ENCODE measurements at regions of chr19 and their contacts with region 1.

Region 1: GRCh38 chr19:11380653-11381534 is 3.2 kb downstream of the EPOR start:
- DNase-seq: peak; percentile 96 to 98 (median 97)
- H3K4me3 ChIP-seq: peak overlapping the region; percentile 47 to 87 (median 71)
- H3K27ac ChIP-seq: peak overlapping the region; percentile 50 to 80
- H3K4me1 ChIP-seq: peaks cover 13 to 66% (median 61%) of the 10 kb centered on the region in 4 experiments
- H3K27me3 ChIP-seq: peaks cover 0 to 6% (median 0%) of the 10 kb centered on the region in 5 experiments

Region 2: DNA sequence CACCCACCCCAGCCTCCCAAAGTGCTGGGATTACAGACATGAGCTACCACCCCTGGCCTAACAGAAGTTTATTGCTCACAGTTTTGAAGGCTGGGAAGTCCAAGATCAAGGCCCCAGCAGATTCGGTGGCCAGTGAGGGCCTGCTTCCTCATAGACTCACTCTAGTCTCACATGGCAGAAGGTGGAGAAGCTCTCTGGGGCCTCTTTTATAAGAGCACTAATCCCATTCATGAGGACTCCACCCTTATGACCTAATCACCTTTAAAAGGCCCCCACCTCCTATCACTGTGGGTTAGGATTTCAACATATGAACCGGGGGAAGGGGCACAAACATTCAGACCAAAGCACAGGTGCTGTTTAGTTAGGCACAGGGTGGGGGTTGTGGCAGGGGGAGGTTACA is 13.4 kb before region 1 on chr19:
- CTCF ChIA-PET with region 1: interaction called, 12 read pairs
- POLR2A ChIA-PET with region 1: no interaction called
- DNase-seq: no peak
- H3K4me3 ChIP-seq: no peak overlapping the region
- H3K27ac ChIP-seq: no peak overlapping the region
- H3K4me1 ChIP-seq: no peaks in the 10 kb centered on the region
- H3K27me3 ChIP-seq: no peaks in the 10 kb centered on the region

Region 3: GRCh38 chr19:11405846-11406643 is 25.2 kb after region 1 on chr19:
- CTCF ChIA-PET with region 1: interaction called, 36 read pairs
- POLR2A ChIA-PET with region 1: no interaction called
- DNase-seq: no peak
- H3K4me3 ChIP-seq: no peak overlapping the region
- H3K27ac ChIP-seq: no peak overlapping the region
- H3K4me1 ChIP-seq: peaks cover 0 to 3% (median 0%) of the 10 kb centered on the region in 4 experiments
- H3K27me3 ChIP-seq: peaks cover 0 to 13% (median 4%) of the 10 kb centered on the region in 5 experiments

Region 4: DNA sequence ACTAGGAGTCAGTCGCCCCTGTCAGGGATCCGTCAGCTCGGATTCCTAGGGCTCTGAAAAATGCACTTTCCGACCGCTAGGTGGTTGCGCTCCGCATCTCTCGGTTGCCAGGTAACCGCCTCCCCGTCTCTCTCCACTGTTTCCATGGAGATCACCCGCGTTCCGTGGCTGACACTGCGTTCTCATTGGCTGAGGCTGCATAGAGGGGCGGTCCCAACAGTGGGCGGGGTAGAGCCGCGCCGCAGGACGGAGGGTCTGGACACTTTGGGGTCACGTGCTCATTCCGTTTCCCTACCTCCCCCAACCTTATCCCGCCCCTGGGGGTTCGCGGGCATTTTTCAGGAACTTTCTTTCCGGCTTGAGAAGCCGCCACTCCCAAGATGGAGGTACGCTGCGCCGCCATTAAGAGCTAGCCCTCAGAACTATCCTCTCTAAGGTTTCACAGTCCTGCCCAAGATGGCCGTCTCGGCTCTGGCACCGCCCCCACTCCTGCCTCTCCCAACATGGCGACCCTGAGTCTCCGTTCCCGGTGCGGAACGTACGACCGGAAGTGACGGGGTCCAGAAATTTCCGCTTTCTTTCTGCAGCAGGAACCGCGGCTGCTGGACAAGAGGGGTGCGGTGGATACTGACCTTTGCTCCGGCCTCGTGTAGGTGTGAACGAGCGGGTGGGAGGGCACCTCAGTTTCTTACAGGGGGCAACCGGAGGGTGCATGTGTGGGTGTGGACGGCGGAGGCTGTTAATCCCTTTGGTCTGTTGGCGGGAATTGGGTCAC is 54.4 kb after region 1 on chr19 and contains the starts of genes ODAD3 and PRKCSH:
- CTCF ChIA-PET with region 1: interaction called, 21 read pairs
- POLR2A ChIA-PET with region 1: interaction called, 4 read pairs
- DNase-seq: peak; percentile 100
- H3K4me3 ChIP-seq: peak within 1 kb of the TSS; percentile 74 to 99 (median 96)
- H3K27ac ChIP-seq: peak within 1 kb of the TSS; percentile 78 to 83
- H3K4me1 ChIP-seq: peaks cover 2 to 18% (median 15%) of the 10 kb centered on the region in 4 experiments
- H3K27me3 ChIP-seq: peaks cover 0 to 2% (median 0%) of the 10 kb centered on the region in 5 experiments

Region 5: GRCh38 chr19:11482384-11483050 is 101.6 kb after region 1 on chr19:
- CTCF ChIA-PET with region 1: interaction called, 10 read pairs
- POLR2A ChIA-PET with region 1: no interaction called
- DNase-seq: peak; percentile 91 to 96 (median 96)
- H3K4me3 ChIP-seq: peak overlapping the region in 4 of 7 experiments; percentile 11 to 51 (median 38)
- H3K27ac ChIP-seq: no peak overlapping the region
- H3K4me1 ChIP-seq: peaks cover 0 to 28% (median 20%) of the 10 kb centered on the region in 4 experiments
- H3K27me3 ChIP-seq: peaks cover 0 to 58% (median 18%) of the 10 kb centered on the region in 5 experiments

Region 6: GRCh38 chr19:11528551-11529341 is 147.9 kb after region 1 on chr19 and contains the start of gene ECSIT:
- CTCF ChIA-PET with region 1: no interaction called
- POLR2A ChIA-PET with region 1: no interaction called
- DNase-seq: peak; percentile 97 to 98 (median 98)
- H3K4me3 ChIP-seq: peak within 1 kb of the TSS; percentile 88 to 96 (median 92)
- H3K27ac ChIP-seq: peak within 1 kb of the TSS in 1 of 2 experiments; percentile 79
- H3K4me1 ChIP-seq: peaks cover 3 to 13% (median 10%) of the 10 kb centered on the region in 4 experiments
- H3K27me3 ChIP-seq: peaks cover 0 to 1% (median 0%) of the 10 kb centered on the region in 5 experiments